Dorsolateral prefrontal cortex (tissue), 120 donors: ENCODE measurements at regions of chr9 and their contacts with region 1.

Region 1: DNA sequence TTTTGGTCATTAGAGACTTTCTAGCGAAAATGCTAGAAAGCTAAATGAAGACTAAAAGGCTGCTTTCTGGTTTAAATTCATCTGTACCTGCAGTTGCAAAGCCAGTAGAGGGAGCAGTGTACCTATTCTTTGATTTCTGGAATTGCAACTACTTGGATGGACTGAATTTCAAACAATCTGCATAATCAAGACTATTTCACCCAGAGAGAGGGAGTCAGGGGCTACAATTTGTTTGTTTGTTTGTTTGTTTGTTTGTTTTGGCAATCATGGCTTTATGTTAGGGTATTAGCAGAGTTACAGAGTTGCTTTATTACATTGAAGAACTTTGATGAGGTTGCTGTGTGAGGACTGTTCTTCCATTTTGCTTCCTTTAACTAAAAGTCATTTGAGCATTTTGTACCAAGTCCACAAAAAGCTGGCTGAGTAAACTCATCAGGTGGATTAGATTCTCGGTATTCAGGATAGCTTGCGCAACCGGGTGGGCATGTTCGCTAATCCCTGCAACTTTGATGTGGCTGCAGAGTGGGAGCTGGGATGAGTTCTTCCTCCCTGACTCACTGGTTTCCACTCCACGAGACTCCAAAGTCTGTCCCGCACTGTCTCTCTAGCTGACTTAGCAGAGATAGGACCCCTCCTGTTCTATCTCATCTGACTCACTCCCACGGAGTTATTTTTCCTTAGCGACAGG is 80.0 kb upstream of the TUT7 start:
- DNase-seq: peak in 1 of 10 donors; percentile 3
- H3K4me3 ChIP-seq: peak overlapping the region in 1 of 59 donors; percentile 26
- H3K27ac ChIP-seq: no peak overlapping the region
- H3K27me3 ChIP-seq: peaks cover 0 to 4% (median 0%) of the 10 kb centered on the region in 45 donors
- CTCF ChIP-seq: peak; percentile 56 to 87 (median 68)

Region 2: DNA sequence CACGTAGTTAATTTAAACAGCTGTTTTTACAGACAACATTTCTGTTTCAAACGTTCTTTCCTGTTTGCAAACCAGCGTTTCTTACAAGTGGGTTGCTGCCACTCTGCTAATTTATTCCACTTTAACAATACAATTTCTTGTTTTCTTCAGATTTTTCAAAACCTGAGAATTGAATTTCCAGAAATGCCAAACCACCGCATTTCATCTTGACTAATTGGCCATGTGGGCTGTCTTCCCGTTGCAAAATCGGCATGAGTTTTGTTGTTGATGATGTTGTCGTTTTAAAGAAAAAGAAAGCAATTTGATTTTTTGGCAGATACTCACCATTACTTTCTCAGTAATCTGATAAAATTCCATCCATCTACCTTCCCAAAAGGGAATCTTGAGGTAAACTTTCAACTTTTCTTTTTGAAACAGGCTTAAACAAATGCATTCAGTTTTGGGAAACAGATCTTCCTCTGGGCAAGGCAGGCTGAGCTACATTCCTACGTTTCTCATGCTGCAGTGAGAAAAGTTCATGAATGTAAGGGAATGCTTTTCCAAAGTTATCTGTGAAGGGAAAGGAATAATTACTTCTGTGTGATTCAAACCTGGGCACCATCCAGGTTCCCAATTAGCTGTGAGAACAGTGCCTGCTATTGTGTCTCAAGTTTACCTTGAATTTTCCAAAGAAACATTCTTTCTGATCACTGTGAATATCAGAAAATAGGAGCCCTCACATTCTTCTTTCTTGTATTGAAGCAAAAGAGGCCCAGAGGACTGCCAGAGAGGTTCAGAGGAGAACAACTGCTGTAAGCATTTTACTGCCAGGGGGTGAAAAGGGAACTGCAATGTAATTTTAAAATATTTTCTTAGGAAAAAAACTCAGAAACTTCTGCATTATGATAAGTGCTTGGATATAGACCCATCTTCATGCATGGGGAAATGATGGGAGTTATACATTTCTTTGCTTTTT is 20.8 kb after region 1 on chr9:
- intact Hi-C with region 1: no loop called
- DNase-seq: no peak
- H3K4me3 ChIP-seq: peak overlapping the region in 20 of 59 donors; percentile 2 to 44 (median 18)
- H3K27ac ChIP-seq: peak overlapping the region in 24 of 59 donors; percentile 6 to 72 (median 33)
- H3K27me3 ChIP-seq: no peaks in the 10 kb centered on the region
- CTCF ChIP-seq: no peak

Region 3: DNA sequence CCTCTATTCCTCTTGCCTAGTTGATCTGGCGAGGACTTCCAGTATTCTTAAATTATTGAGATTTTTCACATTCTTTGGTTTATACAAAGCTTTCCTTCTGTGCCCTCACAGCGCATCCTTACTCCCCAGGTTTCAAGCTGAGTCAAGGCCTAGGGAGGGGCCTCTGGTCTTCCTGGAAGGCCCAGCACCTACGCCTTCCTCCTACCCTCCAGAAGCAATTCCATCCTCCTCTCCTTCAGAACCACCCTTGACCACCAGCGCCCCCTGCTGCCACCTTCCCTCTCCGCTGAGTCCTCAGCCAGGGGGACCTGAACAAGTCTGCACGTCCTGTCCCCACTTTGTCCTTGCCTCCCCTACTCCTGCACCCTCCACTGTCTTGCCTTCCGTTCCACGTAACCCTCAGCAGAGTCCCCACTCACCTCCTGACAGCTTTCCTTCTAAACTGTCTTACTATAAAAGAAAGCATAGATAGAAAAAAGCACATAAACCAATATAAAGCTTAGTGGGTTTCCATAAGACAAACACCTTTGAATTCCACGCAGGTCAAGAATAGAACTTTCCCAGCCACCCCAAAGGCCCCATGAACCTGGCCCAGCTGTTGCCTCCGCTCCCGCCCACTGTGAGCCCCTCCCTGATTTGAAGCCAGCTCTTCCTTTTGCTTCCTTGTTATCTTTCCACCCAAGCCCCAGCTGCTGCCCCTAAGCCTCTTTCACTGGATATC is 1228.8 kb after region 1 on chr9:
- intact Hi-C with region 1: loop called in 1 of 2 experiments (anchors 10 kb)
- DNase-seq: peak in 9 of 10 donors; percentile 44 to 81 (median 58)
- H3K4me3 ChIP-seq: no peak overlapping the region
- H3K27ac ChIP-seq: peak overlapping the region in 2 of 59 donors; percentile 12 to 38
- H3K27me3 ChIP-seq: no peaks in the 10 kb centered on the region
- CTCF ChIP-seq: peak; percentile 21 to 79 (median 69)